Activated T-helper 2 cell treated with anti-CD3 and anti-CD28 coated beads, Interferon-gamma antibody, Interleukin-2, Interleukin-4, amounts not matched to agents 10 μg/mL and 5 μg/mL and 100 μg/mL, durations not matched to agents 14 hours and 24 hours and 36 hours (primary cell): ENCODE measurements at regions of chr4 and their contacts with region 1.

Region 1: DNA sequence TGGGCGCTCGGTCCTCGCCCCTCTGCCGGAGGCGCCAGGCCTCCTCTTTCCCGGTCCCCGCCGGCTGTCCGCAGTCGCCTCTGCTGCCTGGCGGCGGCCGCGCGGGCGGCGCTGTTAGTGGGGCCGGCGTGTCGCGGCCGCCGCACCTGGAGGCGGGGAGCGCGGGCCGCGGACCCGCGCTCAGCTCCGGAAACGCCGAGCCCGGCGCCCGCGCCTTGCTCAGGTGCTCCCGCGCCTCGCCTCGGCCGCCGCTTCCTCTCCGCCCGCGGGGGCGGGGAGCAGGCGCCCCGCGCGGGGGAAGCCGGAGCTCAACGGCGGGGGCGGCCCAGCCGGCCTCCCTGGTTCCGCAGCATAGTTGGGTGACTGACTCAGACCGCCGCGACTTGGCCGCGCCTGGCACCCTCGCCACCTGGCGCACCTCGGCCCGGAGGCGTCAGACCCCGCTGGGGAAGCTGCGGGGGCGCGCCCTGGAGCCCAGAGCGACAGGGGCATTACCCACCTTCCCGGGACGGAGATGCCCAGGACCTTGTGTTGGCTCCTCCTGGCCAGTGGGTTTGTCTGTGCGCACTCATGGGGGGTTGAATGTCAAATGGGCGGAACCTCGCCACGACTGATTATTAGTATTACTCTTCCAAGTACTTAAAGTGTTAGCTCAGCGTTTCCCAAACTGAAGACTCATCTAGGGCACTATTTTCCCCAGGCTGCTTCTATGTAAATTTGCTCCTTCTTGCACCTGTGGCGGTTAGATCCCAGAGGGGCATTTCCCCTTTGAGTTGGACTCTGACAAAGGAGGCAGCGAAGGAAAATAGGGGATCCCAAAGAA is at the start of gene ARAP2:
- DNase-seq: peak; percentile 68
- H3K4me3 Mint-ChIP-seq: peak within 1 kb of the TSS; percentile 96
- H3K27ac Mint-ChIP-seq: peak within 1 kb of the TSS; percentile 95
- H3K4me1 Mint-ChIP-seq: peaks cover 41% of the 10 kb centered on the region
- H3K27me3 Mint-ChIP-seq: peaks cover 8% of the 10 kb centered on the region
- total RNA-seq, gene ARAP2: 29.5 and 35.8 TPM in 2 replicates

Region 2: DNA sequence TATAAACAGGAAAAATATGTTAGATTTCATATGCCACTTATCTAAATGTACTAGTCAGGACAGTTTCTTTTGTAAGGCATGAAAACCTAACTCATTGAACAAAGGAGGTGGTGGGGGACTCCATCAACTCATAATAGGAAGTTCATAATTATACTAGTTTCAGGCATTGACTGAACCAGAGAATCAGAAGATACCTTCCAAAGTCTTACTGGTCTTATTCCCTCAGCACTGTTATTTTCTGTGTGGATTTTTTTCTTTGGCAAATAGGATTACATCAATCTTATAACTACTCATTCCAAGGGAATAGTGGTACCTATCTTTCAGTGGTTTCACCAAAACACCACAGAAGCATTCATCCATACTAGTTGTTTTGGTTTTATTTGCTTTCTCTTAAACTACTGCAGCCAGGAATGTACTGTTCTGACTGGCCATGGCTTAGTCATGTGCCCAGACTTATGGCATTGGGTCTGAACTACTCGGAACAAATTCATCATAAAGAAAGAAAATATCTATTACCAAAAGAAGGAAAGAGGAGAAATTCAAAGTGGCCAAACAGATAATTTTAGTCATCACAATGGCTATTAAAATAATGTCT is 274.0 kb before region 1 on chr4:
- intact Hi-C with region 1: loop called (anchors 10 kb)
- DNase-seq: no peak
- H3K4me3 Mint-ChIP-seq: no peak overlapping the region
- H3K27ac Mint-ChIP-seq: no peak overlapping the region
- H3K4me1 Mint-ChIP-seq: peaks cover 7% of the 10 kb centered on the region
- H3K27me3 Mint-ChIP-seq: peaks cover 5% of the 10 kb centered on the region

Region 3: GRCh38 chr4:36081185-36081584 is 163.3 kb before region 1 on chr4:
- intact Hi-C with region 1: loop called (anchors 5 kb)
- DNase-seq: no peak
- H3K4me3 Mint-ChIP-seq: no peak overlapping the region
- H3K27ac Mint-ChIP-seq: no peak overlapping the region
- H3K4me1 Mint-ChIP-seq: peaks cover 12% of the 10 kb centered on the region
- H3K27me3 Mint-ChIP-seq: no peaks in the 10 kb centered on the region

Region 4: DNA sequence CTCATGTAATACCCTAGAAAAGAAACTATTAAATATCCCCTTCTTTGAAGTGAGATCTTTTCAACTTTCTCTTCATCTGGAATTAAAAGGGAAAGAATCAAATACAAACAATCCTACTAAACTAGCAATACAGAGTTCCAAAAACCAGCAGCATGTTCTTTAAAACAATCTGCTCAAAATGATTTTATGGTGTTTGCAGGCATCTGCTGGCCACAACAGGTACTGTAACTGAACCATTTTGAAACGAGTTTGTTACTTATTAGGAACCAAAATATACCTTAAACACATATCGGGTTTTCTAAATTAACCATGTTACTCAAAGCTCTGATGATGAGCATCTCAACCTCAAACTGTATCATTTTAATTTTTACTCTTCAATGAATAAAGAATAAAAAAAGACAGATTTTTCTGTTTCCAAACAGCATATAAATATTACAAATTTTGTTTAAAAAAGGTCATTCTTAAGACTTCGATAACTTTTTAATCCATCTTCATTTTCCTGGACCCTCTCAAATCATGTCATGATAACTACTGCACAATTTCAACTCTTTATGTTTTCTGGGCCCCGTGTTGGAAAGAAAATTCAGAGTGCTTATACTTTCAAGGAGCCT is 56.6 kb before region 1 on chr4:
- intact Hi-C with region 1: loop called (anchors 2 kb)
- DNase-seq: no peak
- H3K4me3 Mint-ChIP-seq: no peak overlapping the region
- H3K27ac Mint-ChIP-seq: no peak overlapping the region
- H3K4me1 Mint-ChIP-seq: peaks cover 39% of the 10 kb centered on the region
- H3K27me3 Mint-ChIP-seq: no peaks in the 10 kb centered on the region

Region 5: GRCh38 chr4:36208893-36209473 is 35.5 kb before region 1 on chr4:
- intact Hi-C with region 1: loop called (anchors 1 kb)
- DNase-seq: no peak
- H3K4me3 Mint-ChIP-seq: peak overlapping the region; percentile 13
- H3K27ac Mint-ChIP-seq: peak overlapping the region; percentile 74
- H3K4me1 Mint-ChIP-seq: peaks cover 46% of the 10 kb centered on the region
- H3K27me3 Mint-ChIP-seq: no peaks in the 10 kb centered on the region

Region 6: DNA sequence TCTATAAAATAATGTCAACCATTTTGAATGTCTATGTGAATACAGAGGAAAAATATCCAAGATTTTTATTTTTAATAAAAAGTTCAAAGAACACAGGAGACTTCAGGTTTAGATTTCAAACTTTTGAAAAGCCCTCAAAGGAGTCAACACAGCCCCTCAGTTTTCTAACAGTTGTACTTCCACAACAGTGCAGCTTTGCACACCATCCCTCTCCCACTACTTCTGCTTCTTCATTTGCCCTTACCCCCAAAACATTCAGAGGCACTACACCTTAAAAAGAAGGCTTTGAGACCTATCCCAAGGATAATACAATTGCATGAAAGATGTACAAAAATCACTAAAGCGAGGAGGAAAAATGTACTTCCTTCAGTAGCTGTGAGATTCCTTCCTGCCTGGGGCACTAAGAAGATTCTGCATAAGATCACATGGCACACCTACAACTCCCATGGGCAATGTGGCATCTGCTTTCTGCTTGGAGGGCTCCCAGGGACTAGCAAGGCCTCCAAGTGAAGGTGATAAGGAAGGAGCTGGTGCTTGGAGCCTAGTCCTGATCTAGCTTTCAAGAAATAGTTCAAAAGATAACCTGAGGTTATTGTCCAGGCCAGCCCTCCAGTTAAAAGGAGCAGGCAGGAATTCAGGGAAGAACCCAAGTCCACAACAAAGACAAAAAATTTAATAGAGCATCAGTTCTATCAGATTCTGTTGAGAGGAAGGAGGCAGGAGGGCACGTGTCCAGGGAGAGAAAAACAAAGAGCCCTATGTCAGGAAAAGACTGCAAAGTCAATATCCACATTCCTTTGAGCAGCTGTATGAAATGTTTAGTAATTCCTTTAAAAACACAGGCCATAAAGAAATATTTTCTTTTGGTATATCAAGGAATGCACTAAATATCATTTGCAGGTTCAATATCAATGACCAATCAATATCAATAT is 19.2 kb before region 1 on chr4:
- intact Hi-C with region 1: loop called (anchors 2 kb)
- DNase-seq: no peak
- H3K4me3 Mint-ChIP-seq: no peak overlapping the region
- H3K27ac Mint-ChIP-seq: no peak overlapping the region
- H3K4me1 Mint-ChIP-seq: peaks cover 20% of the 10 kb centered on the region
- H3K27me3 Mint-ChIP-seq: no peaks in the 10 kb centered on the region

Region 7: GRCh38 chr4:36394352-36394903 is 150.0 kb after region 1 on chr4:
- intact Hi-C with region 1: loop called (anchors 1 kb)
- DNase-seq: peak; percentile 47
- H3K4me3 Mint-ChIP-seq: peak overlapping the region; percentile 69
- H3K27ac Mint-ChIP-seq: peak overlapping the region; percentile 97
- H3K4me1 Mint-ChIP-seq: peaks cover 26% of the 10 kb centered on the region
- H3K27me3 Mint-ChIP-seq: peaks cover 17% of the 10 kb centered on the region